ENCODE measurements at regions of chr12 and their contacts with region 1.

Region 1: DNA sequence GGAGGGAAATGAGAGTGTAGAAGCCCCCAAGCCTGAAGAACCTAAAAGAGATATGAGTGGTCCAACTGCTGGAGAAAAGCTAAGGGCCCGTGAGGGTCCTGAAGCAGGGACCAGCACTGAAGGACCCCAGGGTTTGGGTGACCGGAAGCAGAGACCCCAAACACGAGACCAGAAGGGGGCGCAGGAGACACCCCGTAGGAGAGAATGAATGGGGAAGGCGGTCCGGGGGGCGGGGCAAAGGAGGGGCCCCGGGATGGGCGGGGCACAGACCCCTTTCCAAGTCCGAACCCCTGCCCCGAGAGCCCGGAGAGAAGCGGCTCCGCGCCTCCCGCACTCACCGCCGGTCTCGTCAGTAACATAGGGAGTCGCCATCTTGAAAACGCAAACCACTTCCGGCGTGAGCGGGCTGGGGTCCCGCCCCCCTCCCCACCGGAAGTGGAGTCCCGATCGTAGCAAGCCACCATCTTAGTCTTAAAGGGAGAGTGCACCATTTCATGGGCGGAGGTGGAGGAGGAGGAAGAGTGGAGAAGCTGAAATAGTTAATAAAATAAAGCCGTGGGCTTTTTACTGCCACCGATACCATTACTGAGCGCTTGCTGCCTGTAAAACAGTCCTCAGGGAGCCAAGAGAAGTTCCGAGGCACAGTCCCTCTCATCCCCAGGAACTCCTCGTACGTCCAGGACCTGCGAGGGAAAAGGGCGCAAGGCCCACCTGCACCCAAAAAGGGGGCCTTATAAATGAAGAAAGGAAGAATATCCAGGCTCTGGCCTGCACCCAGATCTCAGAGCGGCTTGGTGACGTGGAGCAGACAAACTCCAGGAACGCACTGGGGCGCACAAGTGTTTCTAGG is 731 bp downstream of the PYM1 start:
- DNase-seq: peak; percentile 70 to 91 (median 87)
- ATAC-seq: peak; percentile 65
- H3K4me3 ChIP-seq: peak overlapping the region; percentile 99
- H3K4me3 Mint-ChIP-seq: peak overlapping the region; percentile 96 to 100 (median 98)
- H3K27ac ChIP-seq: peak overlapping the region; percentile 90
- H3K27ac Mint-ChIP-seq: peak overlapping the region; percentile 96 to 100 (median 97)
- H3K4me1 ChIP-seq: peaks cover 25 to 28% of the 10 kb centered on the region in 2 donors
- H3K4me1 Mint-ChIP-seq: peaks cover 33 to 61% (median 50%) of the 10 kb centered on the region in 7 donors
- H3K27me3 ChIP-seq: no peaks in the 10 kb centered on the region
- H3K27me3 Mint-ChIP-seq: peaks cover 0 to 2% (median 0%) of the 10 kb centered on the region in 5 donors

Region 2: DNA sequence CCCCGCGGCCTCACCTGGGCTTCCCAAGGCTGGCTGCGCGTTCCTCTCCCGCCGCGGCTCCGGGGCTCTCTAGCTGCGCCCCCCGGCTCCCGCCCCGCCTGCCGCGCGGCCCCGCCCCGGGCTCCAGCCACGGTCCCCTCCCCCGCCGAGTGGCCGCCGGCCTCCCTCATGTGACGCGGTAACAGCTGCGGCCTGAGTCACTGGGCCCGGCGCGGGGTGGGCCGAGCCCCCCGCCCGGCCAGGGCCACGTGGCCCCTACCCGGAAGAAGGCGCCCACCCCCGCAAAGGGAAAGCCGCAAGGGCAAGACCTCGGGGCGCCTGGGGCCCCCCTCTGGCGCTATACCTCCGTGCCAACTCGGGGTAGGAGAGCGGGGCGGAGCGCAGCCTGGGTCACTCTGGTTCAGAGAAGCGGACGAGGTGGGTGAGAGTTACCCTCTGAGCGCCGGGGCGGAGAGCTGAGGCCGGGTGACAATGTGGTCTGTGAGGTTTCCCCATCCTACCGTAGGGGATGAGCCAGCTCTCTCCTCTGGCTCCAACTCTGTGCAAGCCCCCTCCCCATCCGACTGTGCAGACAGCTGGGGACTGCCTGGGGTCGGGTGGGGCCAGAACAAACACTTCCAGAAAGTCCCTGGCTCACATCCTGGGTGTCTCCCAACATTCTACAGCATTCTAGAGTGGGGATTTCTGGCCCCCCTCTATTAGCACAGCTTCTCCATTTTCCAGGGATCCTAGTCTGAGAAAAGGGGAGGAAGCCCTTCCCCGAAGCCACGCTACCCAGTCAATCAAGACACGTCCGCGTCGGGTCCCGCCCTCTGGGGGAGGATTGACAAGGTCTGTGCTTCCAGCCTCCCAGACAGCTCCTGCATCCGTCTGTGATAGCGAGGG is 197.8 kb before region 1 on chr12 and contains the start of gene CD63:
- CTCF ChIA-PET with region 1: no interaction called
- POLR2A ChIA-PET with region 1: interaction called, 5 read pairs
- intact Hi-C with region 1: loop called in 1 of 2 experiments (anchors 2 kb)
- DNase-seq: peak in 6 of 9 donors; percentile 26 to 86 (median 38)
- ATAC-seq: peak; percentile 75
- H3K4me3 ChIP-seq: peak within 1 kb of the TSS; percentile 97
- H3K4me3 Mint-ChIP-seq: peak within 1 kb of the TSS; percentile 73 to 94 (median 90)
- H3K27ac ChIP-seq: peak within 1 kb of the TSS; percentile 74
- H3K27ac Mint-ChIP-seq: peak within 1 kb of the TSS; percentile 81 to 95 (median 91)
- H3K4me1 ChIP-seq: peaks cover 13 to 20% of the 10 kb centered on the region in 2 donors
- H3K4me1 Mint-ChIP-seq: peaks cover 33 to 46% (median 38%) of the 10 kb centered on the region in 7 donors
- H3K27me3 ChIP-seq: no peaks in the 10 kb centered on the region
- H3K27me3 Mint-ChIP-seq: no peaks in the 10 kb centered on the region
- total RNA-seq, gene CD63: 43.2 to 216 (median 54.3) TPM

Region 3: DNA sequence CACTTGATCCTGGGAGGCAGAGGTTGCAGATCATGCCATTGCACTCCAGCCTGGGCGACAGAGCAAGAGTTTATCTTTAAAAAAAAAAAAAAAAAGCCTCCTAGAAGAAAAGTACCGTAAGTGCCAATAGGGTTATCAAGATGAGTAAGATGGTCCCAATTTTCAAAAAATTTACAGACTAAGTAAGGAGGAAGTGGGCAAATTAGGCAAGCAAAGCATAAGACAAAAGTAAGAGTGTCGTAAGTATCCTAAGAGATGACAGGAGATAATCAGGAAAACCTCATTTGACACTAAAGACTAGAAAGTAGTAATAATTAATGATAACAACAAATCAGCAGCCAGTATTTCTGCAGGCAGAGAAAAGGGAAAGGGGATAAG is 11.5 kb before region 1 on chr12:
- CTCF ChIA-PET with region 1: interaction called, 8 read pairs
- POLR2A ChIA-PET with region 1: interaction called, 40 read pairs
- intact Hi-C with region 1: loop called in 1 of 2 experiments (anchors 1 kb)
- DNase-seq: no peak
- ATAC-seq: no peak
- H3K4me3 ChIP-seq: no peak overlapping the region
- H3K4me3 Mint-ChIP-seq: peak overlapping the region in 5 of 10 donors; percentile 0 to 65 (median 39)
- H3K27ac ChIP-seq: peak overlapping the region; percentile 24
- H3K27ac Mint-ChIP-seq: peak overlapping the region in 7 of 9 donors; percentile 8 to 87 (median 24)
- H3K4me1 ChIP-seq: peaks cover 0 to 21% of the 10 kb centered on the region in 2 donors
- H3K4me1 Mint-ChIP-seq: peaks cover 21 to 50% (median 41%) of the 10 kb centered on the region in 7 donors
- H3K27me3 ChIP-seq: no peaks in the 10 kb centered on the region
- H3K27me3 Mint-ChIP-seq: no peaks in the 10 kb centered on the region

Region 4: GRCh38 chr12:55973598-55974307 is 46.8 kb after region 1 on chr12 and contains the start of gene RAB5B:
- CTCF ChIA-PET with region 1: no interaction called
- POLR2A ChIA-PET with region 1: interaction called, 51 read pairs
- intact Hi-C with region 1: loop called (anchors 1 kb)
- DNase-seq: peak; percentile 81 to 100 (median 98)
- ATAC-seq: peak; percentile 92
- H3K4me3 ChIP-seq: peak within 1 kb of the TSS; percentile 84
- H3K4me3 Mint-ChIP-seq: no peak within 1 kb of the TSS
- H3K27ac ChIP-seq: peak within 1 kb of the TSS; percentile 88
- H3K27ac Mint-ChIP-seq: no peak within 1 kb of the TSS
- H3K4me1 ChIP-seq: peaks cover 8 to 19% of the 10 kb centered on the region in 2 donors
- H3K4me1 Mint-ChIP-seq: peaks cover 18 to 31% (median 26%) of the 10 kb centered on the region in 7 donors
- H3K27me3 ChIP-seq: no peaks in the 10 kb centered on the region
- H3K27me3 Mint-ChIP-seq: no peaks in the 10 kb centered on the region
- total RNA-seq, gene RAB5B: 45.2 to 109 (median 62.7) TPM

Region 5: GRCh38 chr12:56152318-56153033 is 225.5 kb after region 1 on chr12 and contains the start of gene MYL6B:
- CTCF ChIA-PET with region 1: no interaction called
- POLR2A ChIA-PET with region 1: no interaction called
- intact Hi-C with region 1: loop called in 1 of 2 experiments (anchors 5 kb)
- DNase-seq: peak; percentile 79 to 94 (median 87)
- ATAC-seq: peak; percentile 98
- H3K4me3 ChIP-seq: peak within 1 kb of the TSS; percentile 86
- H3K4me3 Mint-ChIP-seq: peak within 1 kb of the TSS; percentile 80 to 96 (median 92)
- H3K27ac ChIP-seq: peak within 1 kb of the TSS; percentile 80
- H3K27ac Mint-ChIP-seq: peak within 1 kb of the TSS; percentile 84 to 99 (median 97)
- H3K4me1 ChIP-seq: peaks cover 22 to 25% of the 10 kb centered on the region in 2 donors
- H3K4me1 Mint-ChIP-seq: peaks cover 17 to 55% (median 39%) of the 10 kb centered on the region in 7 donors
- H3K27me3 ChIP-seq: no peaks in the 10 kb centered on the region
- H3K27me3 Mint-ChIP-seq: no peaks in the 10 kb centered on the region
- total RNA-seq, gene MYL6B: 3.7 to 60.3 (median 8.9) TPM

Region 6: DNA sequence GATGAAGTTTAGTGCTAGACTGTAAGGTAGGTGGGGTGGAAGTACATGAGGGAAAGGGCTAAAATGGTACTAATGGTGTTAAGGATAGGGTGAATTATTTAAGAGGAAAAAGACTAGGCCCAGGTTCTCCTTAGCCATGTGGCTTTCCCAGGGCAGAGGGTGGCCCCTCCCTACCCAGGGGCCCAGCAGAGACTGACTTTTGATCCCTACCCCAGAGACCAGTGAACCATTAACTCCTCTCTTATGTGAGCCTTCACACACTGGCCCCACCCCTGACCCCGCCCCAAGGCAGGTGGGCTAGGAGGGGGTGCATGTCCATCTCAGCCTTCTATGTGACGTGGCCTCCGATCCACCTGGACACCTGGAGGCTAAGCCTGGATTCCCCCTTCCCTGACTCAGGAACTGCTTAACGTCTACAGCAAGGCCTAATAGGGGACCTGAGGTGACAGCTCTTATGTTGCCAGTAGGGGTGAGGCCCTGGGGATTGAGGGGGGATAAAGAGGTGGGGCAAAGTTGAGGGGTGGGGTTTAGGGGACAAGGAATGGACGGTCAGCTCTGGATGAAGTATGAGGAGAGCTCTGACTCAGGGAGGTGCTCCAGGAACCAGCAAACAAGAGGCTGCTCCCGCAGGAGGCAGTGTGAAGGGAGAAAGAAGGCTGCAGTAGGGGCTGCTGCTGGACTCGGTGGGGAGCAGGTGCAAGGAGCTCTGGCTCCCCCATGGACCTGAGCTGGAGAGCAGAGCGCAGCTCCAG is 303.6 kb after region 1 on chr12:
- CTCF ChIA-PET with region 1: no interaction called
- POLR2A ChIA-PET with region 1: no interaction called
- intact Hi-C with region 1: no loop called
- DNase-seq: no peak
- ATAC-seq: no peak
- H3K4me3 ChIP-seq: no peak overlapping the region
- H3K4me3 Mint-ChIP-seq: no peak overlapping the region
- H3K27ac ChIP-seq: no peak overlapping the region
- H3K27ac Mint-ChIP-seq: no peak overlapping the region
- H3K4me1 ChIP-seq: no peaks in the 10 kb centered on the region
- H3K4me1 Mint-ChIP-seq: peaks cover 0 to 5% (median under 1%) of the 10 kb centered on the region in 7 donors
- H3K27me3 ChIP-seq: no peaks in the 10 kb centered on the region
- H3K27me3 Mint-ChIP-seq: no peaks in the 10 kb centered on the region

Region 7: DNA sequence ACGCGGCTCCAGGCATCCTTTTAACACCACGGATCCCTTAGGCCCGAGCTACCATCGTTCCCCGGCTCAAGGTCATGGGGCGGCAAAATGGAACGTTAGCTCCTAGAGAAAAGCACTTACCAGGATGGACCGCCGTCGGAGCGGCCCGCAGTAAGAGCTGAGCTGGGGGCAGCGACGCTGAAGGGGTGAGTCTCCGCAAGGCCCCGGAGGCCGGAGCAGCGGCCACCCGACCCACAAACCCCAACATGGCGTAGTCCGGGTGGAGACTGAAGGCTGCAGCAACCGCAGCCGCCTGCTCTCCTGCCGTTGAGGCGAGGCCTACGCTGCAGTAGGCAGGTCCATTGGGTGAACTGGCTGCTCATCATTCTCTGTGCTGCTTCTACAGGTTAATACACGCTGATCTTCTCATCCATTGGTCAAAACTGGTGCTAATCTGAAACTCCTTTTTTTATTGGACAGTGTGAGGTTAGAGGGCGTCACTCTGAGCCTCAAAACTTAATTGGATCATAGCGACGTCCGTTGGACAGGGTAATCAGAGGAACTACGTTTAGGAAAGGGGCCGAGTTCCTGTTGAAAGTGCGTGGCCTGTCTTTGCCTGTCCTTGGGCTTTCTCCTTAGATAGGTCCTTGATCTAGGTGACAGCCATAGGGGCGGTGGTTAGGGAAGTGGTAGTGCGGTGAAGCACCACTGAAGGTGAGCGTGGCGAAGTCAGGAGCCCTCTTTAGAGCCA is 718.9 kb after region 1 on chr12 and contains the start of gene ATP5F1B:
- CTCF ChIA-PET with region 1: no interaction called
- POLR2A ChIA-PET with region 1: no interaction called
- intact Hi-C with region 1: loop called in 1 of 2 experiments (anchors 5 kb)
- DNase-seq: peak; percentile 65 to 97 (median 93)
- ATAC-seq: peak; percentile 97
- H3K4me3 ChIP-seq: peak within 1 kb of the TSS; percentile 83
- H3K4me3 Mint-ChIP-seq: peak within 1 kb of the TSS; percentile 82 to 98 (median 94)
- H3K27ac ChIP-seq: peak within 1 kb of the TSS; percentile 93
- H3K27ac Mint-ChIP-seq: peak within 1 kb of the TSS; percentile 97 to 100 (median 99)
- H3K4me1 ChIP-seq: peaks cover 4 to 21% of the 10 kb centered on the region in 2 donors
- H3K4me1 Mint-ChIP-seq: peaks cover 17 to 39% (median 34%) of the 10 kb centered on the region in 7 donors
- H3K27me3 ChIP-seq: no peaks in the 10 kb centered on the region
- H3K27me3 Mint-ChIP-seq: no peaks in the 10 kb centered on the region
- total RNA-seq, gene ATP5F1B: 217 to 476 (median 267) TPM

Region 8: DNA sequence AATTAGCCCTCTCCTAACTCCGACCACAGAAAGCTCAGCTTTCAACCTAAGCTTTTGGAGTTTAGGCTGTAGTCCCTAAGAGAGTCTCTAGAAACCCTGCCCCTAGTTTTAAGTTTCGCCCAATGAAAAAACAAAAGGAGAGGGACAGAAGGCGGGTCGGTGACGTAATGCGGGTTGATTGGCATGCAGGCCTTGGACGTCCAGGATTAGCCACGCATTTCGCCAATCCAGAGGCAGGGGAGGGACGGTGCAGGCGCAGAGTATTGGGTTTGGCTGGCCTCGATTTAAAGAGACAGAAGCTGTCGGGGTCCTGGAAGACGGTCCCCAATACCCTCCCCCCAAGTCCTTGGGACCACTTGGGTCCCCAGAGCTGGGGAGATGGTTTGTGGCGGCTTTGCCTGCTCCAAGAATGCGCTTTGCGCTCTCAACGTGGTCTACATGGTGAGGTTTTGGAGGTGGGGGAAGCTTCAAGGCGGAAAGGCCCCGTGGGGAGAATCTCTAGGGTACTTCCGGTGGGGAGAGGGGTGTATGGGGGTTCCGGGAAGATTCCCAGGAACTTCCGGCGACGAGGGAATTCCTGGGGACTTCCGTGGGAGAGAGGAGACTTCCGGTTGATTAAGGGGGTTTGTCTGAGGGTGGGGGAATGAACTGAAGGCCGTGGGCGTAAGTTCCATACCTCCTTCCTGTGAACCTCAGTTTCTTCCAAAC is 1818.0 kb after region 1 on chr12 and contains the start of gene TSPAN31:
- CTCF ChIA-PET with region 1: no interaction called
- POLR2A ChIA-PET with region 1: no interaction called
- intact Hi-C with region 1: loop called in 1 of 2 experiments (anchors 5 kb)
- DNase-seq: peak; percentile 70 to 97 (median 94)
- ATAC-seq: peak; percentile 89
- H3K4me3 ChIP-seq: peak within 1 kb of the TSS; percentile 92
- H3K4me3 Mint-ChIP-seq: peak within 1 kb of the TSS; percentile 82 to 100 (median 91)
- H3K27ac ChIP-seq: peak within 1 kb of the TSS; percentile 91
- H3K27ac Mint-ChIP-seq: peak within 1 kb of the TSS; percentile 88 to 97 (median 95)
- H3K4me1 ChIP-seq: peaks cover 33 to 34% of the 10 kb centered on the region in 2 donors
- H3K4me1 Mint-ChIP-seq: peaks cover 35 to 64% (median 52%) of the 10 kb centered on the region in 7 donors
- H3K27me3 ChIP-seq: no peaks in the 10 kb centered on the region
- H3K27me3 Mint-ChIP-seq: no peaks in the 10 kb centered on the region
- total RNA-seq, gene TSPAN31: 12.3 to 23.9 (median 20.3) TPM

Measured in naive thymus-derived CD4-positive, alpha-beta T cell (primary cell).